Activated T-helper 2 cell treated with anti-CD3 and anti-CD28 coated beads, Interferon-gamma antibody, Interleukin-2, Interleukin-4, amounts not matched to agents 10 μg/mL and 5 μg/mL and 100 μg/mL, durations not matched to agents 14 hours and 24 hours and 36 hours (primary cell): ENCODE measurements at regions of chr14 and their contacts with region 1.

Region 1: GRCh38 chr14:61525293-61526011 is 169.9 kb upstream of the HIF1A start:
- DNase-seq: peak; percentile 60
- H3K4me3 Mint-ChIP-seq: peak overlapping the region; percentile 2
- H3K27ac Mint-ChIP-seq: peak overlapping the region; percentile 74
- H3K4me1 Mint-ChIP-seq: peaks cover 69% of the 10 kb centered on the region
- H3K27me3 Mint-ChIP-seq: no peaks in the 10 kb centered on the region

Region 2: GRCh38 chr14:61503167-61503801 is 22.2 kb before region 1 on chr14:
- intact Hi-C with region 1: loop called (anchors 1 kb)
- DNase-seq: peak; percentile 24
- H3K4me3 Mint-ChIP-seq: peak overlapping the region; percentile 76
- H3K27ac Mint-ChIP-seq: peak overlapping the region; percentile 95
- H3K4me1 Mint-ChIP-seq: peaks cover 72% of the 10 kb centered on the region
- H3K27me3 Mint-ChIP-seq: no peaks in the 10 kb centered on the region

Region 3: DNA sequence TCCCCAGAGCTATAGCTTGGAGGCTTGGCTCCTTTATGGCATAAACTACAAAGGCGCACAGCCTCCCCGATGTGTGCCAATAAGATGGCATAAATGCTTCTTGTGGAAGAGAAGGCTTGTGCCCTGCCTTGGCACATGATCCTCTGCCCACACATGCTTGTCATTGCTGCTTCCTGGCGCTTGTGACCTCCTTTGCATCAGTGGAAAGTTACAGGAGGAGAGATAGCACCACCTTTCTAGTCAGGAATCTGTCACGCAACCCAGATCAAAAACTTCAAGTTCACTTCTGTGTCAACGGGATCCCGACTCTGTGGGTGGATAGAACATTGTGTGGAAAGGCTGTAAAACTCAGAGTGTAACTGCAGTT is 13.9 kb before region 1 on chr14:
- intact Hi-C with region 1: loop called (anchors 2 kb)
- DNase-seq: no peak
- H3K4me3 Mint-ChIP-seq: no peak overlapping the region
- H3K27ac Mint-ChIP-seq: peak overlapping the region; percentile 83
- H3K4me1 Mint-ChIP-seq: peaks cover 64% of the 10 kb centered on the region
- H3K27me3 Mint-ChIP-seq: no peaks in the 10 kb centered on the region

Region 4: GRCh38 chr14:61561657-61562276 is 36.3 kb after region 1 on chr14:
- intact Hi-C with region 1: loop called (anchors 5 kb)
- DNase-seq: no peak
- H3K4me3 Mint-ChIP-seq: no peak overlapping the region
- H3K27ac Mint-ChIP-seq: no peak overlapping the region
- H3K4me1 Mint-ChIP-seq: peaks cover 38% of the 10 kb centered on the region
- H3K27me3 Mint-ChIP-seq: peaks cover 1% of the 10 kb centered on the region

Region 5: DNA sequence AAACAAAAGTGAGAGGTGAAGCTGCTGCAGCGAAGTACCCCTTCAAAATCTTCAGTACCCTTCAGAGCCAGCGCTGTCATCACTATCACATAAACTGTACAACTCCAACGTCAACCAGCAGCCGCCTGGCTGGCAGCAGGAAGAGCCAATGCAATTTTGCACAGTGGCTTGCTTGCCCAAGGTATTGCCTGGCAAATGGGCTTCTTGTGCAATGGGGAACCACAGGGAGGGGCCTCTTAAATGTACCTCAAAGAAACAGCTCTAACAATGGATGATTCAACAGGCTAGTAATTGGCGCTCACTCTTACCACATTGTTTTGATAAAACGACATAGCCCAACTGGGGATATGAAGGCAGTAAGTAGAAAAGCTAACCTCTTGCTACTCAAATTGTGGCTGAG is 44.3 kb after region 1 on chr14:
- intact Hi-C with region 1: loop called (anchors 2 kb)
- DNase-seq: peak; percentile 24
- H3K4me3 Mint-ChIP-seq: peak overlapping the region; percentile 19
- H3K27ac Mint-ChIP-seq: peak overlapping the region; percentile 60
- H3K4me1 Mint-ChIP-seq: peaks cover 40% of the 10 kb centered on the region
- H3K27me3 Mint-ChIP-seq: peaks cover 46% of the 10 kb centered on the region